ENCODE measurements at regions of chr7 and their contacts with region 1.

Region 1: GRCh38 chr7:518630-519483 is 789 bp downstream of the PDGFA start:
- DNase-seq: peak; percentile 30 to 88
- H3K4me3 ChIP-seq: peak overlapping the region; percentile 77 to 83
- H3K27ac ChIP-seq: peak overlapping the region; percentile 97
- H3K4me1 ChIP-seq: peaks cover 21 to 47% of the 10 kb centered on the region in 2 donors
- H3K27me3 ChIP-seq: no peaks in the 10 kb centered on the region
- CTCF ChIP-seq: no peak

Region 2: GRCh38 chr7:332646-333392 is 186.0 kb before region 1 on chr7:
- intact Hi-C with region 1: loop called (anchors 5 kb)
- DNase-seq: peak in 1 of 2 donors; percentile 85
- H3K4me3 ChIP-seq: peak overlapping the region; percentile 45 to 64
- H3K27ac ChIP-seq: peak overlapping the region; percentile 15 to 40
- H3K4me1 ChIP-seq: peaks cover 10 to 13% of the 10 kb centered on the region in 2 donors
- H3K27me3 ChIP-seq: no peaks in the 10 kb centered on the region
- CTCF ChIP-seq: peak; percentile 80 to 96 (median 93)

Region 3: GRCh38 chr7:557558-557881 is 38.7 kb after region 1 on chr7:
- intact Hi-C with region 1: loop called (anchors 5 kb)
- DNase-seq: peak; percentile 46 to 89
- H3K4me3 ChIP-seq: no peak overlapping the region
- H3K27ac ChIP-seq: peak overlapping the region; percentile 84 to 91
- H3K4me1 ChIP-seq: peaks cover 8 to 15% of the 10 kb centered on the region in 2 donors
- H3K27me3 ChIP-seq: no peaks in the 10 kb centered on the region
- CTCF ChIP-seq: no peak

Region 4: GRCh38 chr7:867672-868486 is 349.0 kb after region 1 on chr7:
- intact Hi-C with region 1: loop called (anchors 5 kb)
- DNase-seq: peak; percentile 63 to 94
- H3K4me3 ChIP-seq: peak overlapping the region; percentile 32 to 37
- H3K27ac ChIP-seq: peak overlapping the region; percentile 92 to 95
- H3K4me1 ChIP-seq: peaks cover 9 to 30% of the 10 kb centered on the region in 2 donors
- H3K27me3 ChIP-seq: no peaks in the 10 kb centered on the region
- CTCF ChIP-seq: peak in 2 of 3 experiments; percentile 18 to 21